Activated CD4-positive, alpha-beta T cell treated with anti-CD3 and anti-CD28 coated beads, Interleukin-2, amount 10 ng/mL, durations not matched to agents 24 days and 14 days (primary cell): ENCODE measurements at regions of chr1 and their contacts with region 1.

Region 1: GRCh38 chr1:42846257-42847110 is at the start of gene ZNF691:
- DNase-seq: peak; percentile 96
- H3K4me3 Mint-ChIP-seq: peak within 1 kb of the TSS; percentile 96
- H3K27ac Mint-ChIP-seq: peak within 1 kb of the TSS; percentile 84
- H3K4me1 Mint-ChIP-seq: peaks cover 31% of the 10 kb centered on the region
- H3K27me3 Mint-ChIP-seq: no peaks in the 10 kb centered on the region
- total RNA-seq, gene ZNF691: 9.9 and 11.1 TPM in 2 replicates

Region 2: DNA sequence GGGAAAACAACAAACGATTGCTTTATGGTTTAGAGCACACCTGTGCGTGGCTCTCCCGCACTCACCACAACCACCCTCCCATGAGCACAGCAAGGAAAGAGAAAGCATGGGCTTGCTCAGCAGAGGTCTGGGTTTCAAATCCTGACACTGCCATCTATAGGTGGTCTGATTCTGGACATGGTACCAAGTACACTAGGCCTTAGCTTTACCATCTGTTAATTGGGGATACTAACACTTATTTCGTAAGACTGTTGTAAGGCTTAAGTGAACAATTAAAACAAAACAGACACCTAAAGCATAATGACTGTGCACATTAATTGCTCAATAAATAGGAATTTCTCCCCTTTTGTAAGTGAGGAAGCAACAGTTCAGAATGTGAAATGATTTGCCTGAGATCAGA is 977.9 kb before region 1 on chr1:
- intact Hi-C with region 1: no loop called
- DNase-seq: peak; percentile 84
- H3K4me3 Mint-ChIP-seq: peak overlapping the region; percentile 35
- H3K27ac Mint-ChIP-seq: peak overlapping the region; percentile 81
- H3K4me1 Mint-ChIP-seq: peaks cover 34% of the 10 kb centered on the region
- H3K27me3 Mint-ChIP-seq: no peaks in the 10 kb centered on the region

Region 3: DNA sequence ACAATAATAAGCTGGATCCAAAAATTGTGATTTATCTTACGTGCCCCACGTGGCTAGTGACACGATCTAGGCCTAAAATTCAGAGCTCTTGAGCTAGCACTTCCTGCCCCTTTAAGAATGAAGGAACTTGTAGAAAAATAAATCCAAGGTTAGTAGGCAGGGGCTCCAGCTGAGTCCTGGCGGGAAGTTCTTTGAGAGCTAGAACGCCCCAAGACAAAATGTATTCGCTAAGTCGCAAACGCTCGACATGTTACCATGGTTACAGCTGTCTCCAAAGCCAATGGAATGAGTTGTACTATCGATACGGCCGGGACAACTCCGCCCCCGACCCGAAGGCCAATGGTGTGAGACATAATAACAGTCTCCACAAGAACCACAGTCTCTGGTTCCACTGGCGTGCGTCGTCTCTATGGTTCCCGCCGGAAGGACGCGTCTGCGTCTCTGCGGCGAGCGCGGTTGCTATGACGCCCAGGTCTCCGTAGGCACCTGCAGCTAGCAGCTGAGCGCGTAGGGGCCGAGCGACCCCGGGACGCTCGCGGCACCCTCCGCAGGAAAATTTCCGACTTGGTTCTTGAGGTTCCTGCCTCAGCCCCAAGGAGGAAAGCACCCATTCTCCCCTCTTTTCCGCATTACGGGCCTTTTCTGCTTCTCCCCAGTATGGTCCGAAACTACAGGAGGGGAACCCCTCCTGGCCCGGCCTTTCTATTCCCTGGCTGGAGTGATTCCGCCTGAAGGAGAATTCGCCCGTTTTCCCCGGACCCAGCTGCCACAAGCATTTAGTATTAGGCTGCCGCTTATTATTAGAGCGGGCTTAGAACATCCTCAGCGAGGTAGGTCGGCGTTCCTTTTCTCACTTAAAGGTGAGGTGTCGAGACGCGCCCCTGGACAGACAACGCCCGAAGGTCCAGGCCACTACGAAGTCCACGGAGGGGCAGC is 383.4 kb before region 1 on chr1 and contains the start of gene CCDC30:
- intact Hi-C with region 1: loop called (anchors 10 kb)
- DNase-seq: peak; percentile 99
- H3K4me3 Mint-ChIP-seq: peak within 1 kb of the TSS; percentile 85
- H3K27ac Mint-ChIP-seq: peak within 1 kb of the TSS; percentile 78
- H3K4me1 Mint-ChIP-seq: peaks cover 19% of the 10 kb centered on the region
- H3K27me3 Mint-ChIP-seq: peaks cover 10% of the 10 kb centered on the region
- total RNA-seq, gene CCDC30: 0.68 and 1.1 TPM in 2 replicates

Region 4: GRCh38 chr1:42681741-42682483 is 164.6 kb before region 1 on chr1 and contains the start of gene YBX1:
- intact Hi-C with region 1: loop called (anchors 10 kb)
- DNase-seq: peak; percentile 98
- H3K4me3 Mint-ChIP-seq: peak within 1 kb of the TSS; percentile 94
- H3K27ac Mint-ChIP-seq: peak within 1 kb of the TSS; percentile 98
- H3K4me1 Mint-ChIP-seq: peaks cover 50% of the 10 kb centered on the region
- H3K27me3 Mint-ChIP-seq: no peaks in the 10 kb centered on the region
- total RNA-seq, gene YBX1: 861 and 867 TPM in 2 replicates

Region 5: DNA sequence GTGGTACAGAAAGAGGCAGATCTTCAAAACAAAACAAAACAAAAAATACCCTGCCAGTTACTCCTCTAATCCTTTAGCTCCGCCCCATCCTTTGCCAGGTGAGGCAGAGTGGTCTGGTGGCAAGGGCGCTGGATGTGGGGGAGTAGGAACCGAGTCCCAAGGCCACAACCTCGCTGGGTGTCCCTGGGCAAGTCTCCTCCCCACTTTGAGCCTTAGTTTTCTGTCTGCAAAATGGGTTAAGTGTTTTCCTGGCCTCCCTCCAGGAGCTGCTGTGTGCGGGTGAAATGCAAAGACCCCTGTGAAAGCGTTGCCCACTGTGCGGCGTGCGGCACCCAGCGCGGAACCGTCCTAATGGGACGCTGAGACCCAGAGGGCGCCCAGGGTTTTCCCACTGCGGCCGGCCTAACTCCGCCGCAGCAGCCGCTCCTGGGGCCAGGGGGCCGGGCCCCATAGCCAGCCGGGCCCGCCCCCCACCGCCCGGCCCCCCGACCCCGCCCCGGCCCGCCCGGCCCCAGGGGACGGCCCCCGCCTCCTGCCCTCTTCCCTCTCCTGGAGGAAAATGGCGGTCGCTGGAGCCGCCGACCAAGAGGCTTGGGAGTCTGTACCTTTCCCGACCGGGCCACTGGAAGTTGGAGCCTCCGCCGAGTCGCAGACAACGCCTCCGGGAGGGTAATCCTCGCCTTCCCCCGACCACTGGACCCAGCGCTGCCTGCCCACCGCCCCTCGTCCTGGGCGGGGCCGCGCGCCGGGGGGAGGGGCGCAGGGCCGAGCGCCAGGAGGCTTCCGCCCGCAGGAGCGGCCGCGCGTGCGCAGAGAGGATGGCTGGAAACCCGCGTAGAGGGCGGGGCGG is 29.7 kb before region 1 on chr1 and contains the starts of genes ERMAP and SVBP:
- intact Hi-C with region 1: loop called (anchors 1 kb)
- DNase-seq: peak; percentile 97
- H3K4me3 Mint-ChIP-seq: peak within 1 kb of the TSS; percentile 82
- H3K27ac Mint-ChIP-seq: peak within 1 kb of the TSS; percentile 83
- H3K4me1 Mint-ChIP-seq: peaks cover 17% of the 10 kb centered on the region
- H3K27me3 Mint-ChIP-seq: no peaks in the 10 kb centered on the region
- total RNA-seq, gene ERMAP: 3.5 and 3.8 TPM in 2 replicates
- total RNA-seq, gene SVBP: 7.3 and 10.0 TPM in 2 replicates

Region 6: DNA sequence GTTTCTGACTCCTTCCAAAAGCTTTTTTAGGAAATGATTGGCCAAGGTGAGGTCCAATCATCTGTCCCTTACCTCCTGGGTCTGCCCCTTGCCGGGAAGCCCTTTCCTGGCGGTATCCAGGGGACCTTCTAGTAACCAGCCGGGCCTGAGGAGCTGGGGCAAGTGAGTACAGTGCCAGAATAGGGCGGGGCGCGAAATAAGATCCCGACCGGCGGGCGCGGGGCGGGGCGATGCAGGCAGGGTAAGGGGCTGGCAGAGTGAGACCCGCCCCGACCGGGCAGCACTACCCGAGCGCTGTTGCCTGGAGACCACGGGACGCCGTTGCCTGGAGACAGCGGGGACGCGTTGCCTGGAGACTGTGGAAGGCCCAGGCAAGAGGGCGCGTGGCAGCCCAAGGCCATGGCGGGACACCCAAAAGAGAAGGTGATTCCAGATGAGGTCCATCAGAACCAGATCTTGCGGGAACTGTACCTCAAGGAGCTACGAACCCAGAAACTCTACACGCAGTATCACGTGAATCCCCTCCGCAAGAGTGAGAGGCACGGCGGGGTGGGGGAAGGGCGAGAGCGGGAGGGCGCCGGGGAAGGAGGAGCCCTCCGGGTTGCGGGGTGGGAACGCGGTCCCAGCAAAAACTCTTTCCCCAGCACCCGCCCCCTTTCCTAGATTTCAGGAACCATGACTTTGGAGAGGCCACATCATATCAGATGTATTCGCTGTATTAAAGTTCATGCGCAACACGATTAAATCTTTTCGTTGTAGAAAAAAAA is 301.3 kb after region 1 on chr1:
- intact Hi-C with region 1: no loop called
- DNase-seq: peak; percentile 78
- H3K4me3 Mint-ChIP-seq: peak overlapping the region; percentile 16
- H3K27ac Mint-ChIP-seq: no peak overlapping the region
- H3K4me1 Mint-ChIP-seq: no peaks in the 10 kb centered on the region
- H3K27me3 Mint-ChIP-seq: peaks cover 62% of the 10 kb centered on the region

Region 7: GRCh38 chr1:43329995-43330751 is 483.7 kb after region 1 on chr1:
- intact Hi-C with region 1: loop called (anchors 10 kb)
- DNase-seq: peak; percentile 78
- H3K4me3 Mint-ChIP-seq: peak overlapping the region; percentile 38
- H3K27ac Mint-ChIP-seq: peak overlapping the region; percentile 84
- H3K4me1 Mint-ChIP-seq: peaks cover 23% of the 10 kb centered on the region
- H3K27me3 Mint-ChIP-seq: no peaks in the 10 kb centered on the region

Region 8: DNA sequence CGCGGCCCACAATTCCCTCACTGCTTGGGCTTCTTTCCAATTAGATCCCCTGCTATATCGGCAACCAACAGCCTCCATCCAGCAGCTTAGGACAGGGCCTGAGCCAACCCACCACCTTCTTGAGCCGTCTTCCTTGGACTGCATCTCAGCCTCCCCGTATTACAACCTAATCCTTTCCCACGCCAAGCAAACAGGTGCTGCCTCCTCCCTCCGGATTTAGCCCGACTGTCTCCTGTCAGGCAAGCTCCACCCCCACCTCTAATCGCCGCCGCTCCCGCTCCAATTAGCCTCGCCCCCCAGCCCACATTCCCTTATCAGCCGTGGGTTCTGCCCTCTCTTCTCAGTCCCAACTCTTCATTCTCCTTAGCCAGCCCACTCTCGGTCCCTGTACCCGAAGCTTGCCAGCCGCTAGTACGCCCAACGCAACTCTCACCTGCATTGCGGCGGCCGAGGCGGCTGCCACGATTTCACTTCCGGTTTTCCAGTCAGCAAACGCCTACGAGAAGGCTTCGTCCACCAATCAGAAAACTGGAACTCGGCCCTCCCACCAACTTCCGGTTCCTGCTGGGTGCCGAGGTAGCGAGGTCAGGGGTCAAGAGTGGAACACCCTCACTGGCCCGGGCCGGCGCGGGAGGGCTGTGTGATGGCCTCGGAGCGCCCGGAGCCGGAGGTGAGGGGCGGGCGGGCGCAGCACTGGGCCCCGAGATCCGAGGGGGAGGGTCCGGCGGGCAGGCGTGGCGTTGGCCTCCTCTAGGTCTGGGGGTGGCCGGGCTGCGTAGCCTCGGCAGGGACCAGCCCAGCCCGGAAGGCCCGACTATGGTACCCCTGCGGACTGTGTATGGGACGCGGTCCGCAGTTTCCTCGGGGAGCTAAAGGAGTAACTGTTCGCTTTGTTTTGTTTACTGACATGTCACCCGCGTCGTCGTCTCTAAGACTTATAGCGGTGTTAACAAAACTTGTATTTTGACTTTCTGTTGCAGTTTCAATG is 543.1 kb after region 1 on chr1 and contains the starts of genes MED8 and SZT2:
- intact Hi-C with region 1: loop called (anchors 1 kb)
- DNase-seq: peak; percentile 99
- H3K4me3 Mint-ChIP-seq: peak within 1 kb of the TSS; percentile 99
- H3K27ac Mint-ChIP-seq: peak within 1 kb of the TSS; percentile 95
- H3K4me1 Mint-ChIP-seq: peaks cover 40% of the 10 kb centered on the region
- H3K27me3 Mint-ChIP-seq: no peaks in the 10 kb centered on the region
- total RNA-seq, gene MED8: 39.6 and 45.1 TPM in 2 replicates
- total RNA-seq, gene SZT2: 54.0 and 56.2 TPM in 2 replicates

Region 9: GRCh38 chr1:44200336-44200735 is 1353.9 kb after region 1 on chr1:
- intact Hi-C with region 1: no loop called
- DNase-seq: no peak
- H3K4me3 Mint-ChIP-seq: no peak overlapping the region
- H3K27ac Mint-ChIP-seq: no peak overlapping the region
- H3K4me1 Mint-ChIP-seq: no peaks in the 10 kb centered on the region
- H3K27me3 Mint-ChIP-seq: peaks cover 4% of the 10 kb centered on the region